ENCODE measurements at regions of chr14 and their contacts with region 1.

Region 1: DNA sequence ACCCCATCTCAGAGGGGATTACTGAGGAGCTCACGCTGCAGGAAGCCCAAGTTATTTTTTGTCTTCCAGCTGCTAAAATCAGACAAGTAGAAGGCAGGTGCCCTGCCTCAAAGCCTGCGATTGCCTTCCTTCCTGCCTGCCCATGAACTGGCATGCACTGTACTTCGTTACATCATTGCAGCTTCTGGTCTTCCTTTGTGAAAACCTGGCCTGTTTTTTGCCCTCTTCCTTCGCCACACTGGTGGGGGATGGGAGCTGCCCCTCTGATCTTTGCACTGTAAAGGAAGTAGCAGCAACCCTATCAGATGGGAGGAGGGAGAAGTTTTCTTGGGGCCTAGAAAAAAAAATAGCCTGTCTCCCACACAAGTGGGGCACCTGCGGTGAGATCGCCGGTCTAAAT is 1098.7 kb downstream of the BCL11B start:
- DNase-seq: peak; percentile 45
- H3K4me3 Mint-ChIP-seq: peak overlapping the region; percentile 11
- H3K27ac Mint-ChIP-seq: peak overlapping the region; percentile 90
- H3K4me1 Mint-ChIP-seq: peaks cover 92% of the 10 kb centered on the region
- H3K27me3 Mint-ChIP-seq: no peaks in the 10 kb centered on the region

Region 2: GRCh38 chr14:97724265-97724731 is 449.0 kb before region 1 on chr14:
- intact Hi-C with region 1: loop called (anchors 2 kb)
- DNase-seq: peak; percentile 31
- H3K4me3 Mint-ChIP-seq: peak overlapping the region; percentile 72
- H3K27ac Mint-ChIP-seq: peak overlapping the region; percentile 95
- H3K4me1 Mint-ChIP-seq: peaks cover 58% of the 10 kb centered on the region
- H3K27me3 Mint-ChIP-seq: no peaks in the 10 kb centered on the region

Region 3: GRCh38 chr14:98099527-98099926 is 73.8 kb before region 1 on chr14:
- intact Hi-C with region 1: loop called (anchors 1 kb)
- DNase-seq: no peak
- H3K4me3 Mint-ChIP-seq: no peak overlapping the region
- H3K27ac Mint-ChIP-seq: peak overlapping the region; percentile 29
- H3K4me1 Mint-ChIP-seq: peaks cover 31% of the 10 kb centered on the region
- H3K27me3 Mint-ChIP-seq: no peaks in the 10 kb centered on the region

Region 4: GRCh38 chr14:98189062-98189461 is 15.8 kb after region 1 on chr14:
- intact Hi-C with region 1: loop called (anchors 1 kb)
- DNase-seq: no peak
- H3K4me3 Mint-ChIP-seq: peak overlapping the region; percentile 71
- H3K27ac Mint-ChIP-seq: peak overlapping the region; percentile 97
- H3K4me1 Mint-ChIP-seq: peaks cover 92% of the 10 kb centered on the region
- H3K27me3 Mint-ChIP-seq: no peaks in the 10 kb centered on the region

Region 5: GRCh38 chr14:99192028-99192621 is 1018.8 kb after region 1 on chr14:
- intact Hi-C with region 1: loop called (anchors 5 kb)
- DNase-seq: peak; percentile 33
- H3K4me3 Mint-ChIP-seq: peak overlapping the region; percentile 91
- H3K27ac Mint-ChIP-seq: peak overlapping the region; percentile 96
- H3K4me1 Mint-ChIP-seq: peaks cover 76% of the 10 kb centered on the region
- H3K27me3 Mint-ChIP-seq: no peaks in the 10 kb centered on the region